ENCODE measurements at regions of chr19 and their contacts with region 1.

Region 1: GRCh38 chr19:30342901-30343300 is 29.3 kb upstream of the ZNF536 start:
- DNase-seq: no peak
- H3K4me3 ChIP-seq: no peak overlapping the region
- H3K27ac ChIP-seq: no peak overlapping the region
- H3K4me1 ChIP-seq: no peaks in the 10 kb centered on the region
- H3K27me3 ChIP-seq: no peaks in the 10 kb centered on the region
- CTCF ChIP-seq: no peak
- EP300 ChIP-seq: no peak
- POLR2A ChIP-seq: no peak

Region 2: DNA sequence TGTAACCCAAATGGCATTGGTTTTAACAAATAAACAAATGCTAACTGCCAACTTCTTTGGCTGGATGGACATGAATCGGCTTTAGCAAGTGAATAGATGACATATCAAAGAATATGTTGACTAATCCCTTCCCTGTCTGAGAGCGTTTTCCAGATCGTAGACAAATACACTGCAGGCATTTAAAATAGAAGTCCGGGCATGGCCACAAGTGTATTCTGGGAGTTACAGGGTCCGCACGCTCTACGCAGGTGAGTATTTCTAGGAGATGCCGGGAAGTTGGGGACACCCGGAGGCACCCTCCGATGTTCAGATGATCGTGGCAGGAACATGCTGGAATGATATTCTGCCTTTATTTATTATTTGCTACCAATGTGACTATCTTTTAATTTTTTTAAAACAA is 24.0 kb before region 1 on chr19:
- intact Hi-C with region 1: loop called in 1 of 4 experiments (anchors 1 kb)
- DNase-seq: no peak
- H3K4me3 ChIP-seq: no peak overlapping the region
- H3K27ac ChIP-seq: no peak overlapping the region
- H3K4me1 ChIP-seq: no peaks in the 10 kb centered on the region
- H3K27me3 ChIP-seq: no peaks in the 10 kb centered on the region
- CTCF ChIP-seq: no peak
- EP300 ChIP-seq: no peak
- POLR2A ChIP-seq: no peak